Dorsolateral prefrontal cortex (tissue), 120 donors: ENCODE measurements at regions of chr9 and their contacts with region 1.

Region 1: GRCh38 chr9:121213136-121213806 is 11.6 kb upstream of the RAB14 start:
- DNase-seq: peak; percentile 82 to 96 (median 92)
- H3K4me3 ChIP-seq: peak overlapping the region in 9 of 59 donors; percentile 2 to 47 (median 14)
- H3K27ac ChIP-seq: peak overlapping the region in 42 of 59 donors; percentile 6 to 82 (median 58)
- H3K27me3 ChIP-seq: no peaks in the 10 kb centered on the region
- CTCF ChIP-seq: peak; percentile 86 to 100 (median 97)

Region 2: DNA sequence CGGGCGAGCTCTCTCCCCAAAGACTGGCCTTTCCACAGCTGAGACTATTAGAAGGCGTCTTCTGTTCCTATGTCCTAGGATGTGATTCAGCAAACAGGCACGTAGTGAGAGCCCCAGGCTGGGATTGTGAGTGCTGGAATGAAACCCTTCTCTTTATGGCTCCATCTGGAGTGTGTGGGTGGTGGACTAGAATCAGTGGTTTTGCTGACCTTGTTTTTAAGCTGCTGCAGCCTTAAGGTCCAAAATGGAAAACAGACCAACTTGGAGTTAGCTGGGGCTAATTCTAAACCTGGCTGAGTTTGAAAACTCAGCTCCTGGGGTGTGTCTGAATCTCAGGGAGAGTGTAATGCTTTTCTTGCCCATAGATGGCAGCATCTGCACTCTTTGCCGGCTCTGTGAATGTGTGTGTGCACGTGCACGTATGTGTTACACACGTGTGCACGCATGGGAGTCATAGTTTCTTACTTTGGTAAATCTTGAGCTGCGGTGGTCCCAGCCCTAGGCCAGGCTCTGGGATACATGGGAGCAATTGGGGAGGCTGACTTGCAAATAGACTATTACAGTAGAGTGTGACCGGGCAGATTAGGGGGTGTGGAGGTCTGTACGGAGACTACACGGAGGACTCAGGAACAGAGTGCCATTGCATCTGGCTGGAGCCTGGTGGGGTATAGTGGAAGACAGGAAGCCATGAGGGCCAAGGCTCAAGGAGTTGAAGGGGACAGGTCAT is 65.4 kb after region 1 on chr9:
- intact Hi-C with region 1: loop called (anchors 5 kb)
- DNase-seq: peak in 4 of 10 donors; percentile 48 to 82 (median 66)
- H3K4me3 ChIP-seq: peak overlapping the region in 9 of 59 donors; percentile 2 to 24 (median 13)
- H3K27ac ChIP-seq: peak overlapping the region; percentile 51 to 100 (median 98)
- H3K27me3 ChIP-seq: no peaks in the 10 kb centered on the region
- CTCF ChIP-seq: peak; percentile 75 to 93 (median 87)

Region 3: GRCh38 chr9:121321016-121321503 is 107.8 kb after region 1 on chr9:
- intact Hi-C with region 1: loop called (anchors 2 to 10 kb)
- DNase-seq: no peak
- H3K4me3 ChIP-seq: no peak overlapping the region
- H3K27ac ChIP-seq: peak overlapping the region in 46 of 59 donors; percentile 1 to 92 (median 70)
- H3K27me3 ChIP-seq: no peaks in the 10 kb centered on the region
- CTCF ChIP-seq: no peak

Region 4: DNA sequence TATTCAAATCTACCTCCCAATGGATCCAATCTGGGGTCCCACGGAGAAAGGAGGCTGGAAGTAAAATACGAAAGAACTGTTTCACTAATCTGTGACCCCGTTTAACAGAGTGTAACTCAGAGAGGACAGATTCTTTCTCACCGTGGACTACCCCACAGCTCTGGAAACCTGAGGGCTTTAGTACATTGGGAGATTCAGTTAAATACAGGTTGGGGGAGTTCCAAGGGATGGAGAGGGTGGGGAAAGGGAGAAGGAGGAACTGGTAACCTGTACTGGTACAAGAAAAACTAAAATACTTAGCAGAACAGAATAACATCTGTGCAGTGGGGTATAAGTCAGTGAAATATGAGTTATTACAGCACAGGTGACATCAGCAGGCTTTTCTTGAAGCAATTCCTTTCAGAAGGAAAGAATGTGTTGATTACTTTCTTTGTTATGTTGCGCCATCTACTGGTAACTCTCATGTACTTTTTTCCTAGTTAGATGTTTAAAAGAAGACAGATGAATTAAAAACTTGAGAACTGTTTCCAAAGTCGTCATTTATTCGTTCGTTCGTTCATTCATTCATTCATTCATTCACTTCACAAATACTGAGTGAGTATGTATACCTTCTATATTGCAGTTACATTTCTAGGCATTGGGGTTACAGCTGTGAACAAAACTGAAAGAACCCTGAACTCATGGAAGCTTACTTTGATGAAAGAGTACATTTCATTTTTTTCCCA is 186.8 kb after region 1 on chr9:
- intact Hi-C with region 1: loop called (anchors 2 kb)
- DNase-seq: no peak
- H3K4me3 ChIP-seq: no peak overlapping the region
- H3K27ac ChIP-seq: no peak overlapping the region
- H3K27me3 ChIP-seq: no peaks in the 10 kb centered on the region
- CTCF ChIP-seq: peak; percentile 72 to 94 (median 82)